Activated T-helper 2 cell treated with anti-CD3 and anti-CD28 coated beads, Interferon-gamma antibody, Interleukin-2, Interleukin-4, amounts not matched to agents 10 μg/mL and 5 μg/mL and 100 μg/mL, durations not matched to agents 14 hours and 24 hours and 36 hours (primary cell): ENCODE measurements at regions of chrX and their contacts with region 1.

Region 1: DNA sequence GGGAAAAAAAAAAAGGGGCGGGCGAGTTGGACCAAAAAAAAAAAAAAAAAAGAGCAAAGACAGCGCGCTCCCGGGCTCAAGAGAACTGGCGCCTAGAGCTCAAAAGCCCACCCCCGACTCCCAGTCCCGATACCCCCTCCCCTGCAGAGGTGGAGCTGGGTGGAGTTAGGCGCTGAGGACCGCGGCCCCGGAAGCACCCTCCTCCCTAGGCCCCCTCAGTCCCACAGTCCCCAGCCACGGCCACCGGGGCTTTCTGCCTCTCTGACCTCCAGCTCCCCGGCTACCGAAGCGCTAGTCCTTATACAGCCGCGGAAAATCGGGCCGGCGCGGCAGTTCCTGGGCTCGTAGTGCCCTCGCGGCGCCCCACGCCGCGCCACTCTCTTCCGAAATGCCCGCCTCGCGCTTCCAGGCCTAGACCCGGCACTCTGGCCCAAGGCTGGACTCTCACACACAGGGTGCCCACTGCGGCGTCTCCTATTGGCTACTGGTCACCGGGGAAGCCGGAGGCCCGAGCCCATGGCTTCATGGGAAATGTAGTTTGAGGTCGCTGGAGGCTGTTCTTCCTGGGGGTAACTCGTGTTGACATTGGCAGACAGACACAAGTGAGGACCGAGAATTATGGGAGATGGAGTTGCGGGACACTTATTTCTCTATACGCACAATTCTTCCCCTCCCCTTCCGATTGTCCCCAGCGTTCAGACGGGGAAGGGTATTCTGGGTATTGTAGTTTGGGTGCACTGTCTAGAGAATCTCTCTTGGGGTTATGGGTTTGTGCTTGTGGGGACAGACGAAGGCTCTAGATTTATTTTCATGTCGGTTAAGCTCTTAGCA is at the start of gene ENOX2:
- DNase-seq: peak; percentile 82
- H3K4me3 Mint-ChIP-seq: no peak within 1 kb of the TSS
- H3K27ac Mint-ChIP-seq: peak within 1 kb of the TSS; percentile 80
- H3K4me1 Mint-ChIP-seq: peaks cover 8% of the 10 kb centered on the region
- H3K27me3 Mint-ChIP-seq: peaks cover 3% of the 10 kb centered on the region
- total RNA-seq, gene ENOX2: 17.7 and 17.8 TPM in 2 replicates

Region 2: DNA sequence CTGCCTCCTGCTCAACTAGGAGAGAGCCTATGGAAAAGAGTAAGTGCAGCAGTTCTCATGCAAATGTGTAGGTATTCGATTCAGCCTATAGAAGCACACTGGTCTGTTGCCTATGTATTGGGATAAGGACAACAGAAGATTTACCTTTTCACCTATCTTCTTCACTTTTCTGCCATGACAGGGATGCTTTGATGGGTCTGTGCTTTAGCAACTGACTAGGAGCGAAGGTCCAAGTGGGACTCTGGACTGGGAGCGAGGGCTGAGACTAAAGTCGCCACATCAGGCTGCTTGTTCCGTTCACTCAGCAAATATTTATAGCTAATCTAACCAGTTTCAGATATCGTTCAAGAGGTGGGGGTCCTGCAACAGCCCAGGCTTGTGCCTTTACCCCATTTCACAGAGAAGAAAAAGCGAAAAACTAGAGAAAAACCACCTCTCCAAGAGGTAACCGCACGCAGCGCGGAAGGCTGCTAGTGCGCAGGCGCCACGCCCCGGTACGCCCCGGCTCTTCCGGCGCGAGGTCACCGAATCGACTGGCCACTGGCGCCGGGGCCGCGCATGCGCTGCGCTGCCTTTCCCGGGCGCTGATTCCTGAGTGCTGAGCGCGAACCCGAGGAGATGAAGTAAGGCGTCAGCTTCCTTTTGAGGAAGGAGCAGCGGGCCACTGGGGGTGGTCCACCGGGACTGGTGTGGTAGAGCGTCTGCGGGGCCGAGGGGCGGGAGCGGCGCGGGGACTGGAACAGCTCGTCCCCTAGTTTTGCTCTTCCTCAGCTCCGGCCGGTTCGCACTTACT is 501.4 kb before region 1 on chrX and contains the start of gene RBMX2:
- intact Hi-C with region 1: loop called (anchors 2 kb)
- DNase-seq: peak; percentile 65
- H3K4me3 Mint-ChIP-seq: peak within 1 kb of the TSS; percentile 94
- H3K27ac Mint-ChIP-seq: peak within 1 kb of the TSS; percentile 81
- H3K4me1 Mint-ChIP-seq: peaks cover 7% of the 10 kb centered on the region
- H3K27me3 Mint-ChIP-seq: peaks cover 10% of the 10 kb centered on the region
- total RNA-seq, gene RBMX2: 23.8 and 24.4 TPM in 2 replicates

Region 3: GRCh38 chrX:130575831-130576389 is 327.1 kb before region 1 on chrX:
- intact Hi-C with region 1: no loop called
- DNase-seq: no peak
- H3K4me3 Mint-ChIP-seq: no peak overlapping the region
- H3K27ac Mint-ChIP-seq: no peak overlapping the region
- H3K4me1 Mint-ChIP-seq: peaks cover 2% of the 10 kb centered on the region
- H3K27me3 Mint-ChIP-seq: peaks cover 3% of the 10 kb centered on the region

Region 4: GRCh38 chrX:130772105-130772775 is 130.8 kb before region 1 on chrX:
- intact Hi-C with region 1: loop called (anchors 10 kb)
- DNase-seq: no peak
- H3K4me3 Mint-ChIP-seq: no peak overlapping the region
- H3K27ac Mint-ChIP-seq: no peak overlapping the region
- H3K4me1 Mint-ChIP-seq: peaks cover 23% of the 10 kb centered on the region
- H3K27me3 Mint-ChIP-seq: no peaks in the 10 kb centered on the region